Motor neuron (in vitro differentiated cells): ENCODE measurements at regions of chr20 and their contacts with region 1.

Region 1: DNA sequence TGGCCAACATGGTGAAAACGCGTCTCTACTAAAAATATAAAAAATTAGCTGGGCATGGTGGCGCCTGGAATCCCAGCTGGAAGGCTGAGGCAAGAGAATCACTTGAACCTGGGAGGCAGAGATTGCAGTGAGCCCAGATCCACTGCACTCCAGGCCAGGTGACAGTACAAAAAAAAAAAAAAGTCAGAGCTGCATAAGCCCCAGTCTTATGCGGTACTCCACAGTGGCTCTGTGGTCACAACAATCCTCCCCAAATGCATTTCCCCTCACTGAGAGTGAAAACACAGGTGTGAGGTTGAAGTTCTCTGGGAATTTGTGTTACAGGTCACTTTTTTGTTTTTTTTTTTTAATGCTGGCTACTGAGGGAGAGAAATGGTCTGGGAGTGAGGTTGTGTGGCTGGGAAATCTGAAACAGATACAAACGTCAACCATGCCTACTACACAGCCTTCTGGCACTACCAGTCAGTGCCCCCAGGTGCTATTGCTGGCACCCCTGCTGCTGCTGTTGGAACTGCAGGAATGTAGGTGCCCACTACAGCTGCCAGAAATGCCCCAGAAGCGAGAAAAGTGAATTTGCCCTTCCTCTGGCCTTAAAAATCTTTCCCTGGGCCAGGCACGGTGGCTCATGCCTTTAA is 5.7 kb downstream of the MRPS26 start:
- ATAC-seq: no peak
- H3K4me3 ChIP-seq: no peak overlapping the region
- H3K27ac ChIP-seq: no peak overlapping the region
- H3K4me1 ChIP-seq: peaks cover 5 to 6% of the 10 kb centered on the region in 2 donors

Region 2: GRCh38 chr20:3115190-3116107 is 63.9 kb after region 1 on chr20:
- in situ Hi-C with region 1: loop called in 1 of 9 experiments (anchors 10 kb)
- ATAC-seq: peak; percentile 24 to 65 (median 53)
- H3K4me3 ChIP-seq: no peak overlapping the region
- H3K27ac ChIP-seq: no peak overlapping the region
- H3K4me1 ChIP-seq: no peaks in the 10 kb centered on the region